Endothelial cell of umbilical vein (primary cell): ENCODE measurements at regions of chr2 and their contacts with region 1.

Region 1: DNA sequence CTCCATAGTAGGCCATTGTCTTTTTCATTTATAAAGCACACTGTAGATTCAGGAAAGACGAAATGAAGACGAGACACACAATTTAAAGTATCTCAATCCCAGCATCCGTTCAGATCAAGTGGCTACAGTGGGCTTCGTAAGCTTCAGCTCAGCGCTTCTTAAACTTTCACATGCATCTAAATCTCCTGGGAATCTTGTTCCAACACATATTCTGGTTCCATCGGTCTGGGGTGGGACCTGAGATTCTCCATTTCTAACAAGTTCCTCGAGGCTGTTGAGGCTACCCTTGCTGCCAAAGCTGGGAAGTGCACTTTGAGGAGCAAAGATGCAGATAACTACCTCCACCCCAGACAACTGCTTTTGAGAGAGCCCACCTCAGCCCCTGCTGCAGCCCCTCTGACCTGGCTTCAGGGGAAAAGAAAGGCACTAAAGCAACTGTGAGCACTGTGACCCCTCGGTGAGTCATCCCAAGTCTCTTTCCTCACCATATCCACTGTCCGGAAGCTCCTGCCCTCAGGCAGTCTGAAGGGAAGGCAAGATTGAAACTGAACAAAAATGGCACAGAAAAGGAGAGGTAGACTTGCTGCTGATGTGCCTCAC is 201.1 kb upstream of the FBXO11 start:
- DNase-seq: peak; percentile 76
- H3K4me3 ChIP-seq: no peak overlapping the region
- H3K27ac ChIP-seq: peak overlapping the region; percentile 77
- H3K4me1 ChIP-seq: peaks cover 30% of the 10 kb centered on the region
- H3K27me3 ChIP-seq: no peaks in the 10 kb centered on the region
- CTCF ChIP-seq: no peak
- POLR2A ChIP-seq: no peak

Region 2: GRCh38 chr2:47688561-47688960 is 418.9 kb before region 1 on chr2:
- CTCF ChIA-PET with region 1: no interaction called
- POLR2A ChIA-PET with region 1: no interaction called
- dilution Hi-C with region 1: no loop called
- intact Hi-C with region 1: loop called (anchors 2 kb)
- DNase-seq: no peak
- H3K4me3 ChIP-seq: no peak overlapping the region
- H3K27ac ChIP-seq: peak overlapping the region; percentile 30
- H3K4me1 ChIP-seq: peaks cover 14% of the 10 kb centered on the region
- H3K27me3 ChIP-seq: no peaks in the 10 kb centered on the region
- CTCF ChIP-seq: no peak
- POLR2A ChIP-seq: no peak

Region 3: DNA sequence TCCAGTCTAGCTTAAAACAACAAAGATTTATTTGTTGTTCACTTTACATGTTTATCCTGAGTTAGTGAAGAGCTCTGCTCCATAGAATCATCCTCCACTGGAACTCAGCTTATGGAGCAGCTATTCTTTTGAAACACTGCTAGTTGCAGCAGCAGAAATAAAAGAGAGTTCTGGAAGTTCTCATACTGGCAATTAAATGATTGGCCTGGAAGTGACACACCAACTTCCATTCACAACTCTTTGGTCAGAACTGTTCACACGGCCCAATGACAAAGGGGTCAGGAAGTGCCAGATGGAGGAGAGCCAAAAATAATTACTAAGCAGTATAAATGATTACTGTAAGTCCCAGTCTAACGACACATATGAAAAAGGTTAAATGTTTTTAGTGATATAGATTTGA is 240.2 kb before region 1 on chr2:
- CTCF ChIA-PET with region 1: interaction called, 9 read pairs
- POLR2A ChIA-PET with region 1: no interaction called
- dilution Hi-C with region 1: no loop called
- intact Hi-C with region 1: loop called (anchors 2 kb)
- DNase-seq: peak; percentile 97
- H3K4me3 ChIP-seq: peak overlapping the region in 1 of 3 experiments; percentile 27
- H3K27ac ChIP-seq: peak overlapping the region; percentile 85
- H3K4me1 ChIP-seq: peaks cover 32% of the 10 kb centered on the region
- H3K27me3 ChIP-seq: no peaks in the 10 kb centered on the region
- CTCF ChIP-seq: no peak
- POLR2A ChIP-seq: peak; percentile 34

Region 4: DNA sequence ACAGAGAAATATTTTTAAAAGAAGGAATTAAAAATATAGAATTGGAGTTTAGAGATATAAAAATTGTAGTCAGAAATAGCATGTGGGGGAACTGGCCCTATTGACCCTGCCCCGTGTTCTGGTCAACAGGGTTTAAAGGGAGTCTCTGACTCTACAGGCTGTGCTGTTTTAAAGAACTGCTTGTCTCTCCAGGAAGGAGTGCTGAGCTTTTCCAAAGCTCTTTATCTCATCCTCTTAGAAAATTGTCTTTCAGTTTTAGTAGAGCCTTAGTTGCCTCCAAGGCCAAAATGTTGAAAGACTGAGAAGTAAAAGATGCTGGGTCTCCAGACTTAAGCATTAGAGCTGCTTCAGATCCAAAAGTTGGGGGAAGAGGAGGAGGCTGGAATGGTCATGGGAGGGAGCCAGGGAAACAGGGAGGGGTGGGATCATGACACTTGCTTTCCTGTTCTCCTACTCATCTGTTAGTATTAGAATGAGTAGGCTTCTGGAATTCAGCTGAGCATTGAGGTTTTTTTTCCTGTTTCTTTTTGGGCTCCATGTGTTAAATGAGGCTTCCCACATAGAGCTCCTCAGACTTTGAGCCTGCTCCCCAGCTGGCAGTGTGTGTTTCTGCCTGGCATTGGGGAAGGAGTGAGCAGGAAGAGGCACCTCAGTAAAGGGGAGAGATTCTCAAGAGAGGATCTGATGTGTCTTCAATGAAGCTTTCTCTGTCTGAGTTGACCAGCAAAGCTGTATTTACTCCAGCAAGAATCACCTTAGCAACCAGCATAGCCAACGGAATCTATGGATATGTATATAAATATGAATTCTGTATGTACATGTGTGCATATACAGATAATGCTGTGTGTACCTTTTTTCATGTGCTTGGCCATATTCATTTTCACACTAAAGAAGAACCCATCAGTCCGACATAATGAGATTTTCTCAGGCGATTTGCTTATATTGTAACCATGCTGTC is 14.3 kb before region 1 on chr2:
- CTCF ChIA-PET with region 1: interaction called, 10 read pairs
- POLR2A ChIA-PET with region 1: no interaction called
- dilution Hi-C with region 1: no loop called
- intact Hi-C with region 1: no loop called
- DNase-seq: no peak
- H3K4me3 ChIP-seq: no peak overlapping the region
- H3K27ac ChIP-seq: no peak overlapping the region
- H3K4me1 ChIP-seq: peaks cover 14% of the 10 kb centered on the region
- H3K27me3 ChIP-seq: no peaks in the 10 kb centered on the region
- CTCF ChIP-seq: no peak
- POLR2A ChIP-seq: no peak

Region 5: DNA sequence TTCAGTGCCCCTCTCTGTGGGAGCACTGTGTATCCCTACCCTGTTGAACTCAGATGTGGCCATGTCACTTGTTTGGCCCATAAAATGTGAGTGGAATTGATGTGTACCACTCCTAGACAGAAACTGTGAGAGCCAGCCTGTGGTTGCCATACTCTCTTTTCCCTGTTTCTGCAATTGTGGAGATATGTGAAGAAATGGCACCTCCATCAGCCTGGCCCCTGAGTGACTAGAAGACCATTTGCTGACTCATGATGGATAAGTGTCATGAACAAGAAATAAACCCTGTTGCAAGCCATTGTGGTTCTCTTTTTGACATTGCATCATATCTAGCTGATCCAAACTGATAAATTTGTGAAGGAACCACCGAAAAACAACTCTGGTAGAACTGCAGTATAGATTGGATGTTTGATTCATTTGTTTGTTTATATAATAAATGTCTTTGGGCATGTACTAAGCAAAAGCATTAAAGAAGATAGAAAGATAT is 13.4 kb after region 1 on chr2:
- CTCF ChIA-PET with region 1: no interaction called
- POLR2A ChIA-PET with region 1: no interaction called
- dilution Hi-C with region 1: no loop called
- intact Hi-C with region 1: no loop called
- DNase-seq: no peak
- H3K4me3 ChIP-seq: no peak overlapping the region
- H3K27ac ChIP-seq: no peak overlapping the region
- H3K4me1 ChIP-seq: no peaks in the 10 kb centered on the region
- H3K27me3 ChIP-seq: no peaks in the 10 kb centered on the region
- CTCF ChIP-seq: no peak
- POLR2A ChIP-seq: no peak

Region 6: DNA sequence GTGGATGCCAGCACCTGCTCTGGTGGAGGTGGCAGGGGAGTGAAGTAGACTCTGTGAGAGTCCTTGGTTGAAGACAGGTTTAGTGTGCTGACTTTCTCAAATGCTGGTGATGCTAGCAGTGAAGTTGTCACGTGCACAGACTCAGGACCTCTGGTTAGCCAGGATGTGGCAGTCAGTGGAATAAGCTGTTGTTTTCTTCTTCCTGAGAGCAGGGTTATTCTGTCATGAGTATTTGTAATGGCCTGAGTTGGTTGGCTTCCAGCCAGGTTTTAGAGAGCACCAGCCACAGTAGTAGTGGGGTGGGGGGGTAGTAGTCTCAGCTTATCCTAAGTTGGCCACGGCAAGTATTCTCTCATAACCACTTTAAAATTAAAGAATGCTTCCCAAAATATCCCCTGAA is 37.4 kb after region 1 on chr2:
- CTCF ChIA-PET with region 1: no interaction called
- POLR2A ChIA-PET with region 1: no interaction called
- dilution Hi-C with region 1: no loop called
- intact Hi-C with region 1: no loop called
- DNase-seq: peak; percentile 20
- H3K4me3 ChIP-seq: no peak overlapping the region
- H3K27ac ChIP-seq: no peak overlapping the region
- H3K4me1 ChIP-seq: no peaks in the 10 kb centered on the region
- H3K27me3 ChIP-seq: peaks cover 1 to 3% of the 10 kb centered on the region in 2 experiments
- CTCF ChIP-seq: no peak
- POLR2A ChIP-seq: no peak

Region 7: DNA sequence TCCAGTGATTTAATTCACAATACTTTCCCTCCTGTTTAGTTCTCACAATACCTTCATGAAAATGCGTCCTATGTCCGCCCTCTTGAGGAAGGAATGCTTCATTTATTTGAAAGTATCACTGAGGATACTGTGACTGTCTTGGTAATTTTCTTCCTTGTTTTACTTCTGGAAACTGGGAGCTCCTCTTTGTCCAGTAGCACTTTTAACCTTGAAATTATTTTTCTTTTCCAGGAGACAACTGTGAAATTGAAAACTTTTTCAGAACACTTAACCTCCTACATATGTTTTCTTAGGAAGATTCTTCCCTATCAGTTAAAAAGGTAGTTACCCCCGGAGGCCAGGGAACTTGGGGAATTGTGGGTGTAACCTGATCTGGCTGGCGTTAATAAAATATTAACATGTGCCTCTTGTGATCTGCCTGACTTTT is 363.6 kb after region 1 on chr2:
- CTCF ChIA-PET with region 1: interaction called, 3 read pairs
- POLR2A ChIA-PET with region 1: no interaction called
- dilution Hi-C with region 1: no loop called
- intact Hi-C with region 1: loop called (anchors 1 kb)
- DNase-seq: peak; percentile 83
- H3K4me3 ChIP-seq: no peak overlapping the region
- H3K27ac ChIP-seq: no peak overlapping the region
- H3K4me1 ChIP-seq: no peaks in the 10 kb centered on the region
- H3K27me3 ChIP-seq: no peaks in the 10 kb centered on the region
- CTCF ChIP-seq: peak; percentile 27 to 28
- POLR2A ChIP-seq: no peak